AG04449 (cell line): ENCODE measurements at regions of chr6 and their contacts with region 1.

Region 1: GRCh38 chr6:31087494-31088089 is 24.8 kb downstream of the C6orf15 start:
- DNase-seq: peak; percentile 23
- H3K4me3 ChIP-seq: no peak overlapping the region
- CTCF ChIP-seq: peak; percentile 77

Region 2: DNA sequence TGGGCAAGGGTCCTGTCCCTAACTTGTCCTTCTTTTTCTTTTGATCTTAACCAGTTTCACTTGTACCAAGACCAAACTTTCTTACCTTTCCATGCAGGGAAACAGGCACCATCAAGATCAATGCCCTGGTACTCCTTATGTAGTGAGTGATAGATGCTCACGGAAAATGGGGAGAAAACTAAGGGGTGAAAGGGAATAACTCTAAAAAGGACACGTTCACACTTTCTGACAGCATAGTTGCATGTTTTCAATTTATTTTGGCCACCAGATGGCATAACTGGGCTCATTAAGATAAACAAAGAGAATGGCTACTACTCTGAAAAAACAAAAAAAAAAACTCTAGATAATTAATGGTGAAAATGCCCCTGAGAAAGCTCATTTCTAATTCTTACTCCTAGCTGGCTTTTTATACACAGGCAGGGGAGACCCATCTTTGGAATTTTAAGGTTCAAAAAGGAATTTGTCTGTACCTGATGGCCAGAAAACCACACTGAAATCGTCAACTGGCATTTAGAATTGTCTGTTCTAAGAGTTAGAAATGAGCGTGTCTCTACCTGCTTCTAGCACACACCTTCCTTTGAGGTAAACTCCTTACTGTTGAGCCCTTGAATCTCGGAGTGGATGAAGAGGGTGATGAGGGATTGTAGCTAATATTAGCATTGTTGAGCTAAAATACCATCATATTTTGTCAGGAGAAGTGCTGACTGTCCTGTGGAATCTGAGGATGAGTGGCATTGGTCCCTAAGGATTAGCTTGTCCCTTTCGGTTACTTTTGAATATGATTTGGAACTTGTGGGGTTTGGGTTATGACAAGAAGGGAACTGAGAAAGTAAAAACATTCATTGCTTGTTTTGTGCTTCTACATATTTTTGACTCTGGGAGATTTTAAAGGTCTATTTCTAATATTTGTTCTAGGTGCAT is 265.5 kb before region 1 on chr6:
- CTCF ChIA-PET with region 1: interaction called, 78 read pairs
- POLR2A ChIA-PET with region 1: interaction called, 4 read pairs
- DNase-seq: no peak
- H3K4me3 ChIP-seq: no peak overlapping the region
- CTCF ChIP-seq: peak; percentile 33

Region 3: DNA sequence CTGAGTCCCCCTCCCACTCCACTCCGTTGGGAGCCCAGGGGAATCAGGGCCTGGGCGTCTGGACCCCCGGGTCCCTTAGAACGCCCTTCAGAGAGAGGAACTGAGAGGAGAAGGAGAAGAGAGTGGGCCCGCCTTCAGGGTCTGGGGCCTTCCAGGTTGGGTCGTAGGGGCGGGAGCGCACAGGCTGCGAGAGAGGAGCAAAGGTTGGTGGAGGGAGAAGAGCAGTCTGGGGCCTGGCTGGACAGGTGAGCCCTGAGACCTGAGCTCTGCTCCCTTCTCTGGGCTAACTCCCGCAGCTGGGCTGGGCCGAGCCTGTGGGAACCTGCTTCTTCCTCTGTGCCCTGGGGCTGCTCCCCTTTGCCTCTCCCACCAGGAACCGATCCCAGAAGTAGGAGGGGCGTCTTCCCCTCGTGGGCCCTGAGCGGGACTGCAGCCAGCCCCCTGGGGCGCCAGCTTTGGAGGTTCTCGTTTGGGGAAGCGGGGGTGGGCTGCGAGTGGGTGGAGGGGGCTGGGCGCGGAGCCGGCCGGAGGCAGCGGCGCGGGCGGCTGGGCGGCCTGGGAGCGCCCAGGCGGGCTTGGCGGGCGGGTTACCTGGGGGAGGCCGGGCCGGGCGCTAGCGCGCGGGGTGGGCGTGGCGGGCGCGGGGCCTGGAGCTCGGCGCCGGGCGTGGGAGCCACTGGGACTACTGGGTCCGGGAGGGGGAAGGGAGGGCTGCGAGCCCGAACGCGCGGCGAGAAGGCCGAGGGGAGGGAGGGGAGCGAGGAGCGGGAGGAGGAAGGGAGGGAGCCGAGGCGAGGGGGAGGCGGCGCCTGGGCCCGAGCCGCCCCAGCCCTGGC is 203.7 kb before region 1 on chr6 and contains the start of gene DDR1:
- CTCF ChIA-PET with region 1: interaction called, 16 read pairs
- POLR2A ChIA-PET with region 1: no interaction called
- DNase-seq: no peak
- H3K4me3 ChIP-seq: peak within 1 kb of the TSS; percentile 82
- CTCF ChIP-seq: no peak

Region 4: DNA sequence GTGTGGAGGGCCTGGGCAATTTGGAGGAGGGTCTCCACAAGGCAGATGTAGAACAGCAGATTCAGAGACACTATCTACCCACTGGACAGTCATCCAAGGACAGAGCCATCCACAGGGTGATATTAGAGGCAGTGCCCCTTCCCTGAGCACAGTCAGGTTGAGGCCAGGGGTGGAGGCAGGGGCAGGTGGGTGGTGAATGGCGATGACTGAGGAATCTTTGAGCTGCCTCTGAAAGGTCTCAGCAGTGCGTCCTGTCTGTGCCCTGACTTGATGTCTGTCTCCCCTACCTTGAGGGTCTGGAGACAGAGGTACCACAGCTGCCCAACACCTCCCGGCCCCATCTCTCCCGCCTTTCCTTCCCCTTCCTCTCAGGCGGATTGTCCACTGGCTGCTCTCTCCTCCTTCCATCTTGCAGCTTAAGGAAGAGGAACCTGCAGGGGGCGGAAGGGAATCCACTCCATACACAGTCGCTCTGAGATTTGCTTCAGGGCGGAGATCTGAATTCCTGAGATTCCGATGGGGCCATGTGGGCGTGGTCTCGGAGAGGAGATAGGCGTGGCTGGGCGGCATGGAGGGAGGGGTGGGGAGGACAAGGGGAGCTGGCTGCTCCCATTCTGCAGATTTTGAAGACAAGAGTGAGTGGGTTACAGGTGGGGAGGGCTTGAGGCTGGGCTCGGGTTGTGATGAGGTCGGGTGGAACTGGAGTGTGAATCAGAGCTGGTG is 145.1 kb before region 1 on chr6:
- CTCF ChIA-PET with region 1: interaction called, 23 read pairs
- POLR2A ChIA-PET with region 1: no interaction called
- DNase-seq: peak; percentile 17
- H3K4me3 ChIP-seq: no peak overlapping the region
- CTCF ChIP-seq: peak; percentile 77

Region 5: GRCh38 chr6:31097568-31098053 is 10.0 kb after region 1 on chr6:
- CTCF ChIA-PET with region 1: interaction called, 80 read pairs
- POLR2A ChIA-PET with region 1: no interaction called
- DNase-seq: no peak
- H3K4me3 ChIP-seq: no peak overlapping the region
- CTCF ChIP-seq: no peak

Region 6: GRCh38 chr6:31114970-31115849 is 27.6 kb after region 1 on chr6:
- CTCF ChIA-PET with region 1: interaction called, 30 read pairs
- POLR2A ChIA-PET with region 1: no interaction called
- DNase-seq: no peak
- H3K4me3 ChIP-seq: peak overlapping the region; percentile 25
- CTCF ChIP-seq: peak; percentile 35